IMR-90 (cell line): ENCODE measurements at regions of chr1 and their contacts with region 1.

Region 1: GRCh38 chr1:51564124-51564523 is 45.1 kb upstream of the EPS15 start:
- DNase-seq: peak; percentile 74
- ATAC-seq: peak; percentile 30; the same call in 1 of the 2 replicates
- H3K4me3 ChIP-seq: no peak overlapping the region
- H3K27ac ChIP-seq: no peak overlapping the region
- H3K4me1 ChIP-seq: peaks cover 7% of the 10 kb centered on the region
- H3K27me3 ChIP-seq: no peaks in the 10 kb centered on the region
- CTCF ChIP-seq: no peak
- POLR2A ChIP-seq: no peak
- RAD21 ChIP-seq: no peak

Region 2: DNA sequence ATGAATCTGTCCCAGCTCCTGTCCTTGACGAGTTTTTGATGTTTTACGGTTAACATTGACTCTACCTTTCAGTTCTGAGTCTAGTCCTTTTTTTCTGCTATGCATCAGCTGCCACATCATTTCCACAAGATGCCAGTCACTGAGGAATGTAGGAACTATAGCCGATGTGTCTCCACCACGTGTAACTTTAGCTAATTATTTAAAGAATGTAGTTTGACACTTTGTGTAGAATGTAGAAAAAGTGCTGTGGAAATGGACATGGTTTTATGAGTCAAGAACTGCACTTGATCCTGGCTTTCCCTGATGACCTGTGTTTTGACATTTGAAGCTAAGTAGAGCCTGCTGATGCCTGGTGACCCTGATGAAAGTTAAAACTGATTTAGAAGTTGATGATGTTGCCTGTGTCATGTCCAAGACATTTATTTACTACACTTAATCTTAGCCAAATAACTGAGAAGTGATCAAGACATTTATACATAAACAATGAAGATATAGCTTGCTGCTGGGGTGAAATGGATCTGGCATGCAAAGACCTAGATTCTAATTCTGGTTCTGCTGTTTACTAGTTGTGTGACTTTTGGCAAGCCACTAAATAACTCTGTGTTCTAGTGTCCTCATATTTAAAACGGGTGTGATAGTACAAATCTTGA is 48.4 kb after region 1 on chr1:
- CTCF ChIA-PET with region 1: no interaction called
- POLR2A ChIA-PET with region 1: interaction called, 11 read pairs
- dilution Hi-C with region 1: no loop called
- in situ Hi-C with region 1: no loop called
- intact Hi-C with region 1: no loop called
- DNase-seq: peak; percentile 33
- ATAC-seq: peak; percentile 3; the same call in 1 of the 2 replicates
- H3K4me3 ChIP-seq: no peak overlapping the region
- H3K27ac ChIP-seq: no peak overlapping the region
- H3K4me1 ChIP-seq: no peaks in the 10 kb centered on the region; the same call in 1 of the 2 replicates
- H3K27me3 ChIP-seq: no peaks in the 10 kb centered on the region
- CTCF ChIP-seq: no peak
- POLR2A ChIP-seq: no peak
- RAD21 ChIP-seq: no peak

Region 3: GRCh38 chr1:52264530-52265115 is 700.5 kb after region 1 on chr1:
- CTCF ChIA-PET with region 1: no interaction called
- POLR2A ChIA-PET with region 1: no interaction called
- dilution Hi-C with region 1: no loop called
- in situ Hi-C with region 1: no loop called
- intact Hi-C with region 1: no loop called
- DNase-seq: no peak
- ATAC-seq: no peak
- H3K4me3 ChIP-seq: no peak overlapping the region
- H3K27ac ChIP-seq: no peak overlapping the region
- H3K4me1 ChIP-seq: peaks cover 6% of the 10 kb centered on the region
- H3K27me3 ChIP-seq: no peaks in the 10 kb centered on the region
- CTCF ChIP-seq: no peak
- POLR2A ChIP-seq: no peak
- RAD21 ChIP-seq: no peak